Heart left ventricle (tissue), 16 donors: ENCODE measurements at regions of chr9 and their contacts with region 1.

Region 1: DNA sequence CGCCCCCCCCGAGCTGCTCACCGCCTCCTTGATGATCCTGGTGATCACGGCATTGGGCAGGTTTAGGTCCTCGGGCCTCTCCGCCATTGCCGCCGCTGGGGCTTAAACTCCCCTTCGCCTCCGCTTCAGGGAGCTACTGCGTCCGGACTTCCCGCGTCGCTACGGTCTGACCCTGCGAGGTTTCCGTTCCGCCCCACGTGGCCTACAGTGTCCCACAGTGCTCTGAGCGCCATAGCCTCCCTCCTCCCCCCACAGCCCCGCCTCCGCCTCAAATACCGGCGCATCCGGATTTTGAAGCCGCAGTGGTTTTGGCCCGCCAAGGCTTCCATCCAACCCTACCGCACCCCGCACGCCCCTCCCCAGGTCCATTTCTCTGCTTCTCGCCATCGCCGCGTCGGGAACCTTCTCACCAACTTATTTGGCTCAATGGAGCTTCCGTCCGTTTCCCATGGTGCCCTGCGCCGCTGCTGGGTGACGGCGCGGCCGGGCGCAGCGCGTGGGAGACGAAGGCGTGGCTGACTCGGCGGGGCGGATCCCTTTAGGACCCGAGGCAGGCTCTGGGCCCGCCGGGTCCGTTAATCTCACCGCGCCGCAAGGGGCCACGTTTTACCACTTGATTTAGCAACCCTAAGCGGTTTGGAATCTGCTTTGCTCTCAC is at the starts of genes C9orf43 and POLE3:
- DNase-seq: peak; percentile 95 to 97 (median 96)
- ATAC-seq: peak; percentile 97 to 99 (median 98)
- H3K4me3 ChIP-seq: peak within 1 kb of the TSS; percentile 61 to 97 (median 80)
- H3K27ac ChIP-seq: peak within 1 kb of the TSS; percentile 85 to 99 (median 97)
- H3K4me1 ChIP-seq: peaks cover 0 to 25% (median 12%) of the 10 kb centered on the region in 12 donors
- H3K27me3 ChIP-seq: no peaks in the 10 kb centered on the region
- CTCF ChIP-seq: no peak
- POLR2A ChIP-seq: peak in 1 of 2 donors; percentile 66
- total RNA-seq, gene C9orf43: 0.14 to 0.93 (median 0.49) TPM in 4 of 9 donors, not detected in the others
- total RNA-seq, gene POLE3: 18.7 to 31.2 (median 24.3) TPM

Region 2: DNA sequence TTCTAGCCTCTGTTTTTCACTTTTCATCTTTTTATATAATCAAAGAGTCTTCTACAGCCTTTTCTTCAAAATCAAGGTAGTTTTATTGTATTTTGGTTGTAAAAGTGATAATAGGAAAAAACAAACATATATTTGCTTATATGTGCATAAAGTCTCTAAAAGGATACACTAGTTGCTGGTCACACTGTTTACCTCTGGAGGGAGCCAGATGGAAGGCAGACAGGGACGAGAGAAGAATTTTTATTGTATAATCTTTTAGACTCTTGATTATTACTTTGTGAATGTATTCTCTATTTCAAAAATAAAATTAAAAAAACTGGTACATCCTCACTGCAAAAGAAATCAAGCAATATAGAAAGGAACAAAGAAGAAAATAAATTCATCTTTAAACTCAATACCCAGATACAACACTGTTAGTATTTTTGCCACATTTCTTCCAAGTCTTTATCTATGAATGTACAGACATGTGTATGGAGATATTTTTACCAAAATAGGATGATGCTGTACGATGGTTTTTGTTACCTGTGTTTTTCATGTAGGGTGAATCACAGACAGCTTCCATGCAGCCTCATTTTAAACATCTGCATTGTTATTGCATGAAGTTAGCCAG is 101.0 kb before region 1 on chr9:
- intact Hi-C with region 1: loop called in 7 of 10 experiments (anchors 1 to 5 kb)
- DNase-seq: no peak
- ATAC-seq: peak in 2 of 4 donors; percentile 63 to 64
- H3K4me3 ChIP-seq: no peak overlapping the region
- H3K27ac ChIP-seq: peak overlapping the region in 3 of 12 donors; percentile 16 to 73 (median 71)
- H3K4me1 ChIP-seq: peaks cover 0 to 22% (median 9%) of the 10 kb centered on the region in 12 donors
- H3K27me3 ChIP-seq: no peaks in the 10 kb centered on the region
- CTCF ChIP-seq: peak; percentile 56 to 83 (median 65)
- POLR2A ChIP-seq: no peak

Region 3: DNA sequence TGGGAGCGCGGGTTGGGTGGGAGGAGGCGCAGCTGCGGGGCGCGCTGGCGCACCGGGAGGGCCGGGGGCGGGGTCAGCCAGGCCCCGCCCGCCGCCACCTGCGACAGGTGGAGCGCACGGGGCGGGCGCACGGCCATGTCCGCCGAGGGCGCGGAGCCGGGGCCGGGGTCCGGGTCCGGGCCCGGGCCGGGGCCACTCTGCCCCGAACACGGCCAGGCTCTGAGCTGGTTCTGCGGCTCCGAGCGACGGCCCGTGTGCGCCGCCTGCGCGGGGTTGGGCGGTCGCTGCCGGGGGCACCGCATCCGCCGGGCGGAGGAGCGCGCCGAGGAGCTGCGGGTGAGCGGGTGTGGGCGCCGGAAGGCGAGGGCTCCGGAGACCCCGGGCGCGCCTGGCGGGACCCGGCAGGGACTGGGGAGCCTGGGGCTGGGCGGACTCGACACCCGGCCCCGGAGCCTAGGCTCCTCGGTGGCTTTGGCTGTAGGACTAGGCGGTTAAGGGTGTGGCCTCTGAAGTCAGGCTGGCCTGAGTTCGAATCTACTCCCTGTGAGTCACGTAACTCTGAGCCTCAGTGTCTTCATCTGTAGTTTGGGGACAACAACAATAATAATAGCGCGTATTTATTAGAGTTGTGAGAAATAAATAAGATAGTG is 60.8 kb before region 1 on chr9 and contains the start of gene BSPRY:
- intact Hi-C with region 1: no loop called
- DNase-seq: no peak
- ATAC-seq: peak in 3 of 4 donors; percentile 17 to 56 (median 30)
- H3K4me3 ChIP-seq: peak within 1 kb of the TSS; percentile 22 to 64 (median 50)
- H3K27ac ChIP-seq: no peak within 1 kb of the TSS
- H3K4me1 ChIP-seq: peaks cover 0 to 17% (median 7%) of the 10 kb centered on the region in 12 donors
- H3K27me3 ChIP-seq: peaks cover 0 to 31% (median 10%) of the 10 kb centered on the region in 9 donors
- CTCF ChIP-seq: no peak
- POLR2A ChIP-seq: no peak
- total RNA-seq, gene BSPRY: 0.39 to 7.6 (median 1.7) TPM in 8 of 9 donors, not detected in the other

Region 4: GRCh38 chr9:113454914-113455761 is 44.8 kb after region 1 on chr9:
- intact Hi-C with region 1: no loop called
- DNase-seq: peak in 4 of 5 donors; percentile 58 to 80 (median 68)
- ATAC-seq: peak; percentile 85 to 96 (median 94)
- H3K4me3 ChIP-seq: no peak overlapping the region
- H3K27ac ChIP-seq: peak overlapping the region; percentile 84 to 97 (median 90)
- H3K4me1 ChIP-seq: peaks cover 4 to 39% (median 28%) of the 10 kb centered on the region in 12 donors
- H3K27me3 ChIP-seq: no peaks in the 10 kb centered on the region
- CTCF ChIP-seq: peak in 1 of 12 donors; percentile 8
- POLR2A ChIP-seq: no peak